Gastrocnemius medialis (tissue), 4 donors: ENCODE measurements at regions of chr2 and their contacts with region 1.

Region 1: GRCh38 chr2:197310271-197310985 is at the start of gene ANKRD44:
- DNase-seq: peak; percentile 82 to 87
- ATAC-seq: peak; percentile 72 to 81
- H3K4me3 ChIP-seq: peak within 1 kb of the TSS; percentile 60 to 85 (median 70)
- H3K27ac ChIP-seq: peak within 1 kb of the TSS; percentile 65 to 80 (median 70)
- H3K4me1 ChIP-seq: peaks cover 23 to 29% of the 10 kb centered on the region in 2 donors
- H3K27me3 ChIP-seq: no peaks in the 10 kb centered on the region
- CTCF ChIP-seq: peak; percentile 44 to 76 (median 57)
- POLR2A ChIP-seq: peak; percentile 79 to 85
- total RNA-seq, gene ANKRD44: 1.8 to 6.3 (median 3.0) TPM

Region 2: GRCh38 chr2:197011799-197012641 is 298.4 kb before region 1 on chr2:
- in situ Hi-C with region 1: loop called in 2 of 4 experiments (anchors 25 kb)
- intact Hi-C with region 1: loop called (anchors 5 kb)
- DNase-seq: no peak
- ATAC-seq: peak; percentile 56 to 75
- H3K4me3 ChIP-seq: no peak overlapping the region
- H3K27ac ChIP-seq: no peak overlapping the region
- H3K4me1 ChIP-seq: peaks cover 0 to 3% of the 10 kb centered on the region in 2 donors
- H3K27me3 ChIP-seq: no peaks in the 10 kb centered on the region
- CTCF ChIP-seq: peak; percentile 58 to 77 (median 64)
- POLR2A ChIP-seq: no peak

Region 3: DNA sequence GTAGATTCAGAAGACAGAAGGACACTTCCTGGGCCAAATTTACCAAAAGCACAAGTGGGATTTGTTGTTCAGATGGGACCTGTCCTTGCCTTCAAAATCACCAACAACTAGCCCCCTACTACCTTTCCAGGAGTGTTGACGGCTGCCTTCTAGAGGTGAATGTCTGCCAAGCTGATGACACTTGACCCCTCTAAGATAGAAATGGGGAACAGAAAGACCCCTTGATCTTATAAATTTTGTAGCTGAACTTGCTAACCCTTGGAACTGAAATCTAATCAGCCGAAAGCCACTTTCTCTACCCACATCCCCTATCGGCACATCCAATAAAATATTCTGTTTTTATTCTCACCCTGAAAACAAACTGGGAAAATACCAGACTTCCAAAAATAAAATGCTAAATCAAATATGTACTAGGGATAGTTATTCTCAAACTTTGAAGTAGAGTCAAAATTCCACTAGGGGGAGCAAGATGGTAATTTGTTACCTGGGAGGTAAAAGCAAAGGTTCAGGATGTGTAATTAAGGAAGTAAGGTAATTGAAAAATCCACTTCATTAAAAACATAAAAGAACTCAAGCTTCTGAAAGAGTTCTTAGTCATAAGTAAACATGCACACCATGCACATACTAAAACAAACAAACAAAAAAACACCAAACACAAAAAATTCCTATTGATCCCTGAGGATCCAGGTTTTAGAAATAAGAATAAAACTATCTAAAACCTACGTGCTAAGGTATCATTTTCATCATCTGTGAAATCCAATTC is 119.1 kb before region 1 on chr2:
- in situ Hi-C with region 1: loop called (anchors 5 to 10 kb)
- intact Hi-C with region 1: loop called (anchors 1 kb)
- DNase-seq: no peak
- ATAC-seq: peak; percentile 49 to 56
- H3K4me3 ChIP-seq: no peak overlapping the region
- H3K27ac ChIP-seq: no peak overlapping the region
- H3K4me1 ChIP-seq: peaks cover 8 to 12% of the 10 kb centered on the region in 2 donors
- H3K27me3 ChIP-seq: no peaks in the 10 kb centered on the region
- CTCF ChIP-seq: peak; percentile 61 to 82 (median 65)
- POLR2A ChIP-seq: no peak

Region 4: GRCh38 chr2:197268786-197269584 is 41.4 kb before region 1 on chr2:
- in situ Hi-C with region 1: no loop called
- intact Hi-C with region 1: loop called (anchors 1 kb)
- DNase-seq: no peak
- ATAC-seq: peak in 1 of 2 donors; percentile 35
- H3K4me3 ChIP-seq: no peak overlapping the region
- H3K27ac ChIP-seq: no peak overlapping the region
- H3K4me1 ChIP-seq: peaks cover 10 to 11% of the 10 kb centered on the region in 2 donors
- H3K27me3 ChIP-seq: no peaks in the 10 kb centered on the region
- CTCF ChIP-seq: no peak
- POLR2A ChIP-seq: no peak

Region 5: GRCh38 chr2:197538412-197538811 is 228.0 kb after region 1 on chr2:
- in situ Hi-C with region 1: no loop called
- intact Hi-C with region 1: no loop called
- DNase-seq: no peak
- ATAC-seq: no peak
- H3K4me3 ChIP-seq: no peak overlapping the region
- H3K27ac ChIP-seq: no peak overlapping the region
- H3K4me1 ChIP-seq: peaks cover 11 to 20% of the 10 kb centered on the region in 2 donors
- H3K27me3 ChIP-seq: no peaks in the 10 kb centered on the region
- CTCF ChIP-seq: no peak
- POLR2A ChIP-seq: no peak